A673 (cell line): ENCODE measurements at regions of chr6 and their contacts with region 1.

Region 1: GRCh38 chr6:80605165-80605989 is 498.9 kb downstream of the BCKDHB start:
- DNase-seq: peak; percentile 74
- H3K4me3 ChIP-seq: no peak overlapping the region
- H3K27ac ChIP-seq: no peak overlapping the region
- H3K4me1 ChIP-seq: peaks cover 20% of the 10 kb centered on the region
- H3K27me3 ChIP-seq: no peaks in the 10 kb centered on the region
- CTCF ChIP-seq: peak; percentile 79

Region 2: DNA sequence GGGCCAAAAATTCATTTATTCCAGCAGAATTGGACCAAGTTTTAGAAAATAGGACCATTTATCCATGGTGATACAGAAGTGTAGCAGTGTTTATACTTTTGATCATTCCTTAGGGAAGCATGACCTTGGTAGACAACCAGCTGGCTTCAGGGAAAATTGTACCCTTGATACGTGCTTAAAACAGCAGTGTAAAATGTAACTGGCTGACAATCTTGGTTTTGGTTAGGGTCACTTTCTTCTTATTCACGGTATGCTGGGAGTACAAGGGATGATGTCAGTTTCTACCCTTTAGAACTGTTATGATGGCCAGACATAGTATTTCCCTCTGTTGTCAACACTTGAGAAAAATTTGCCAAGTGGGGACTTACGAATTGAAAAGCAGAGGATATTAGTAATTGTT is 341.8 kb before region 1 on chr6:
- CTCF ChIA-PET with region 1: no interaction called
- POLR2A ChIA-PET with region 1: no interaction called
- intact Hi-C with region 1: no loop called
- DNase-seq: no peak
- H3K4me3 ChIP-seq: no peak overlapping the region
- H3K27ac ChIP-seq: no peak overlapping the region
- H3K4me1 ChIP-seq: no peaks in the 10 kb centered on the region
- H3K27me3 ChIP-seq: no peaks in the 10 kb centered on the region
- CTCF ChIP-seq: no peak

Region 3: GRCh38 chr6:80872199-80872950 is 267.0 kb after region 1 on chr6:
- CTCF ChIA-PET with region 1: no interaction called
- POLR2A ChIA-PET with region 1: no interaction called
- intact Hi-C with region 1: loop called (anchors 10 kb)
- DNase-seq: peak; percentile 88
- H3K4me3 ChIP-seq: no peak overlapping the region
- H3K27ac ChIP-seq: peak overlapping the region; percentile 95
- H3K4me1 ChIP-seq: peaks cover 17% of the 10 kb centered on the region
- H3K27me3 ChIP-seq: no peaks in the 10 kb centered on the region
- CTCF ChIP-seq: no peak

Region 4: GRCh38 chr6:81465859-81466258 is 860.5 kb after region 1 on chr6:
- CTCF ChIA-PET with region 1: no interaction called
- POLR2A ChIA-PET with region 1: no interaction called
- intact Hi-C with region 1: loop called (anchors 10 kb)
- DNase-seq: peak; percentile 62
- H3K4me3 ChIP-seq: no peak overlapping the region
- H3K27ac ChIP-seq: no peak overlapping the region
- H3K4me1 ChIP-seq: no peaks in the 10 kb centered on the region
- H3K27me3 ChIP-seq: no peaks in the 10 kb centered on the region
- CTCF ChIP-seq: peak; percentile 77

Region 5: GRCh38 chr6:82040405-82041221 is 1435.2 kb after region 1 on chr6:
- CTCF ChIA-PET with region 1: no interaction called
- POLR2A ChIA-PET with region 1: no interaction called
- intact Hi-C with region 1: loop called (anchors 5 kb)
- DNase-seq: peak; percentile 84
- H3K4me3 ChIP-seq: no peak overlapping the region
- H3K27ac ChIP-seq: no peak overlapping the region
- H3K4me1 ChIP-seq: no peaks in the 10 kb centered on the region
- H3K27me3 ChIP-seq: no peaks in the 10 kb centered on the region
- CTCF ChIP-seq: peak; percentile 87